ENCODE measurements at regions of chr3 and their contacts with region 1.

Region 1: GRCh38 chr3:21274079-21274571 is 476.9 kb downstream of the ZNF385D start:
- DNase-seq: no peak
- H3K4me3 ChIP-seq: no peak overlapping the region
- H3K27ac ChIP-seq: no peak overlapping the region
- H3K4me1 ChIP-seq: no peaks in the 10 kb centered on the region
- H3K27me3 ChIP-seq: no peaks in the 10 kb centered on the region
- CTCF ChIP-seq: no peak
- EP300 ChIP-seq: no peak
- POLR2A ChIP-seq: no peak
- RAD21 ChIP-seq: no peak

Region 2: GRCh38 chr3:21290557-21290956 is 16.4 kb after region 1 on chr3:
- CTCF ChIA-PET with region 1: interaction called, 16 read pairs
- POLR2A ChIA-PET with region 1: no interaction called
- DNase-seq: no peak
- H3K4me3 ChIP-seq: no peak overlapping the region
- H3K27ac ChIP-seq: no peak overlapping the region
- H3K4me1 ChIP-seq: no peaks in the 10 kb centered on the region
- H3K27me3 ChIP-seq: no peaks in the 10 kb centered on the region
- CTCF ChIP-seq: peak in 2 of 3 experiments; percentile 18 to 25; a peak in 2 of 4 replicates
- EP300 ChIP-seq: no peak
- POLR2A ChIP-seq: no peak
- RAD21 ChIP-seq: peak; percentile 30 to 42; a peak in 3 of 4 replicates

Region 3: GRCh38 chr3:21390136-21390535 is 116.0 kb after region 1 on chr3:
- CTCF ChIA-PET with region 1: no interaction called
- POLR2A ChIA-PET with region 1: no interaction called
- DNase-seq: no peak
- H3K4me3 ChIP-seq: no peak overlapping the region
- H3K27ac ChIP-seq: no peak overlapping the region
- H3K4me1 ChIP-seq: no peaks in the 10 kb centered on the region
- H3K27me3 ChIP-seq: no peaks in the 10 kb centered on the region
- CTCF ChIP-seq: no peak
- EP300 ChIP-seq: no peak
- POLR2A ChIP-seq: no peak
- RAD21 ChIP-seq: no peak